Posterior cingulate gyrus (tissue), 11 donors: ENCODE measurements at regions of chr15 and their contacts with region 1.

Region 1: GRCh38 chr15:40274350-40275274 is 8.3 kb downstream of the ANKRD63 start:
- DNase-seq: peak; percentile 61 to 96 (median 82)

Region 2: DNA sequence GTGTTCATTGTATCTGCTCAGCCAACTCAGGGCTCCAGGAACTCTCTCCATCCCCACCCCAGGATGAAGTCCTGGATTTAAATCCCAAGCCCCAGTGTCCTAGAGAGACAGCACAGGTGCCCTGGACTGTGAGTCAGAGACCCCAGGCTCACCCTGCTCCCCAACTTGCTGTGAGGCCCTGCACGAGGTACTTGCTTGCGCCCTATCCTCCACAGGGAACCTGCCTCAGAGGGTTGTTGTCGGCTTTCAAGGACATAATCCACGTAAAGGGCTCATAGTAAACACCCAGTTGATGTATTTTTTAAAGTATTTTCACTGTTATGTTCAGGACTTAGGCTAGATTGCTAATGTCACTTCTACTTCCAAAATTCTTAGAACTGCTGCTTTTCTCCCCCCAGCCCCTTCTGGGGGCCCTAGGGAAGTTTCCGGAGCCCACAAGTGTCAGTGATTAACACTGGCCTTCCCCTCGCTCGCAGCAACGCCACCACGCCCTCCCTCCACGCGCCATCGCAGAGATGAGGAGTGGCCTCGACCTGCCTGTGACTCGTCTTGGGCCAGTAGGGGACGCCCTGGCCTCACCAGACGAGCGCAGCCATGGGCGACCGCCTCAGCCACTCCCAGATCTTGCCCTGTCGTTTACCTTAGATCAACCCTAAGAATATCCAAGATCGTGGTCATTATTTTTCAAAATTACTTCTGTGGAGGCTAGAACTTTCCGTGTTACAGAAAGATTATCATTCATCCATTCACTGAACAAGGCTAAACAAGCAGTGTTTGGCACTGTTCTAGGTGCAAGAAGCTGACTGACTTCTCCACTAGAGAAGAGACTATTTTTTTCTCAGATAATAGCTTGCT is 229.7 kb before region 1 on chr15:
- intact Hi-C with region 1: loop called (anchors 1 kb)
- DNase-seq: peak; percentile 68 to 97 (median 81)

Region 3: GRCh38 chr15:40115670-40116093 is 158.9 kb before region 1 on chr15:
- intact Hi-C with region 1: no loop called
- DNase-seq: peak in 2 of 10 donors; percentile 28 to 91

Region 4: GRCh38 chr15:40217159-40217824 is 57.3 kb before region 1 on chr15:
- intact Hi-C with region 1: loop called (anchors 1 kb)
- DNase-seq: no peak